ENCODE measurements at regions of chr17 and their contacts with region 1.

Region 1: GRCh38 chr17:71472809-71473789 is 647.7 kb upstream of the SOX9 start:
- DNase-seq: no peak
- H3K4me3 ChIP-seq: no peak overlapping the region
- H3K27ac ChIP-seq: no peak overlapping the region
- H3K4me1 ChIP-seq: no peaks in the 10 kb centered on the region
- H3K27me3 ChIP-seq: peaks cover under 1% of the 10 kb centered on the region
- CTCF ChIP-seq: peak; percentile 69

Region 2: GRCh38 chr17:71080937-71081336 is 392.2 kb before region 1 on chr17:
- intact Hi-C with region 1: no loop called
- DNase-seq: no peak
- H3K4me3 ChIP-seq: no peak overlapping the region
- H3K27ac ChIP-seq: no peak overlapping the region
- H3K4me1 ChIP-seq: no peaks in the 10 kb centered on the region
- H3K27me3 ChIP-seq: no peaks in the 10 kb centered on the region
- CTCF ChIP-seq: no peak

Region 3: DNA sequence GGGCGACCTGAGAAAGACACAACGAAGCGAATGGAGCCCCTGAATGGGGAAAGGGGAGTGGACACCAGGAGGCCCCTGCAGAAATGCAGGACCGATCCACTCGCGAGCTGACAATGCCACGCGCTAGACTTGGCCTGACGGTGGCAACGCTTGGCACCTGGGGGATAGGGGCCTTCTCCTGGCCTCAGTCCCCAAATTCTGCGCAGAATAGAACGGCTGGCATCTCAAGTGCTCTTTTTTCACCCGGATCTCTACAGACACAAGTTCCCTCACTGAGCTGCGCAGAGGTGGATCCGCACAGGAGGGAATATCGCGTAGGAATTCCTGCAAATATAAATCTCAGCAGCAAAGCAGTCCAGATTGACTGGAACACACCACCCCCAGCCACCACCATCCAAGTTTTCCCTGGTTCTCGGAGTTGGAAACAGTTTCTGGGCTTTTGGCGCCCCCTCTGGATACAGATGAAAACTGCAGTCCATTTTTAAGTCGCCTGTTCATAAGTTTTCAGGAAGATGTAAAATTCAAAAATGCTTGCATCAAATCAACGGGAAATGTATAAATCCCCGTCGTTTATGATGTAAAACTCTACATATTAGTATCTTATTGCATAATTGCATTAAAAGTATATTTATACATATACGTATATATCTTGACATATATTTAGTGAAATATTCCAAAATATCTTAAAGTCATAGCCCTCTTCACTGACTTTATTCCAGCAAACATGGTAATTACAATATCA is 645.4 kb after region 1 on chr17:
- intact Hi-C with region 1: loop called (anchors 10 kb)
- DNase-seq: peak; percentile 52
- H3K4me3 ChIP-seq: peak overlapping the region; percentile 81
- H3K27ac ChIP-seq: peak overlapping the region; percentile 85
- H3K4me1 ChIP-seq: peaks cover 66% of the 10 kb centered on the region
- H3K27me3 ChIP-seq: peaks cover 92% of the 10 kb centered on the region
- CTCF ChIP-seq: peak; percentile 90